ENCODE measurements at regions of chr5 and their contacts with region 1.

Region 1: DNA sequence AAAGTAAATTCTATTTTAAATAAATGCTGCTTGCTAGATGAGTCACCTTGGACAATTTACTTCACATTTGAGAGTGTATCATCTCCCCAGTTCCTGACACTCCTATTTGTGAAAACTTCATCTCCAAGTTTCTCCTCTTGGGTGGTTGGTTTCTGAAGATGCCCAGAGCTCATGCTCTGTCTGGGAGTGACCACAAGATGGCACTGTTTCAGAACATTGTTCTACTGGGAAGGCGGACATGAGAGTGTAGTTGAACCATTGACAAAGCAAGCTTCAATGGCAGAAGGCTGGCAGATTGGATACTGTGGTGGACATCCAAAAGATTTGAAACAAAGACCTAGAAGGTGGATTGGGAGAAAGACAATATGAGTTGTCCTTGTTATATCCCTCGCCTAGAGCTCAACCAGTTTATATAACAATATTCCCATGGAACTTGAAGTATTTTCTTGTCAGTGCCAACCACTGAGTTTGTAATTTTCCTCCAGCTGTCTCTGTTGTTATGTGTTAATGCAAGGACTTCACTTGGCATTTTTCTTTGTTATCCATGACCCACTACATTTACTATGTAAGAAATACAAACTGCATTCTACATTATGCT is 234.3 kb upstream of the ANKH start:
- DNase-seq: peak in 1 of 2 experiments; percentile 39
- H3K4me3 ChIP-seq: no peak overlapping the region
- H3K27ac ChIP-seq: no peak overlapping the region
- H3K4me1 ChIP-seq: no peaks in the 10 kb centered on the region
- H3K27me3 ChIP-seq: no peaks in the 10 kb centered on the region
- CTCF ChIP-seq: peak; percentile 83

Region 2: DNA sequence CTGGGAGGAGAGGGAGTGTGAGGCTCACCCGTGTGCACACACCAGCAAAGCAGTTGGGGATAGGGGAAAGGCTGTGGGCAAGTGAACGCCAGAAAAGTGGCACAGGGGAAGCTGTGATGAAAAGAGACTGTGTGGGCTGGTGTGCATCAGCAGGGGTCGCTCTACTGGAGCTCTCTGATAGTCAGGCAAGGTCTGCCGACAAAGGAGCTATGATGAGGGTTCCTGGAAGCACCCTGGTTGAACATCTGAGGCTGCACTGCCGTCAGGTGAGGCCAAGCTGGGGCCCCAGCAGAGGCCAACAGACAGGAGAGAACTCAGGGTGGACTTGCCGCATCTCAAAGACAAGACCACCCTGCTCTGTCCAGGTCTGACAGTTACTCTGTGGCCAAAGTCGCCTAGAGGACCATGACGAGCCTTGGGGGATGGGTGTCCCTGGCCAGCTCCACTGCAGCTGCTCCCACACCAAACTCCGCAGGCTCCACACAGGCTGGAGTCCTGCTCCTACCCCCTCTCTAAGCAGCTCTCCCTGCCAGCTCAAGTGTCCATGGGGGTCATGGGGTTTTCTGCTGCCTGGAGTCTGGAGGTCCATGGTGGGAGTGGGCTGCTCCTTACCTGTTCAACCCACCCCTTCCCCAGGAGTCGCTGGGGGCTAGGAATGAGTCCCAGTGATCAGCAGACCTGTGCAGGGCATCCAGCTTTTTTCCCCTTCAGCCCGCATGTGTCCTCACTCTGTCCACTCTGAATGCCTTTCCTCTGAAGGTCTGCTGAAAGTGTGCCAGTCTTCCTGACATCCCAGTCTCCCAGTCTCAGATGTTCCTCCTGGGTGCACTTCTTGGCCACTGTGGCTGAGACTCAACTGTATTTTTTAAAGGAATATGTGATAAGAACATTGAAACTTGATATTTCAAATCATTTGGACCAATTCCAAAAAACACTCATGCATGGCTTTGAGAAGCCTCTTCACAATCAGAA is 26.8 kb after region 1 on chr5:
- CTCF ChIA-PET with region 1: interaction called, 3 read pairs
- POLR2A ChIA-PET with region 1: interaction called, 10 read pairs
- intact Hi-C with region 1: no loop called
- DNase-seq: no peak
- H3K4me3 ChIP-seq: no peak overlapping the region
- H3K27ac ChIP-seq: no peak overlapping the region
- H3K4me1 ChIP-seq: no peaks in the 10 kb centered on the region
- H3K27me3 ChIP-seq: no peaks in the 10 kb centered on the region
- CTCF ChIP-seq: no peak

Region 3: DNA sequence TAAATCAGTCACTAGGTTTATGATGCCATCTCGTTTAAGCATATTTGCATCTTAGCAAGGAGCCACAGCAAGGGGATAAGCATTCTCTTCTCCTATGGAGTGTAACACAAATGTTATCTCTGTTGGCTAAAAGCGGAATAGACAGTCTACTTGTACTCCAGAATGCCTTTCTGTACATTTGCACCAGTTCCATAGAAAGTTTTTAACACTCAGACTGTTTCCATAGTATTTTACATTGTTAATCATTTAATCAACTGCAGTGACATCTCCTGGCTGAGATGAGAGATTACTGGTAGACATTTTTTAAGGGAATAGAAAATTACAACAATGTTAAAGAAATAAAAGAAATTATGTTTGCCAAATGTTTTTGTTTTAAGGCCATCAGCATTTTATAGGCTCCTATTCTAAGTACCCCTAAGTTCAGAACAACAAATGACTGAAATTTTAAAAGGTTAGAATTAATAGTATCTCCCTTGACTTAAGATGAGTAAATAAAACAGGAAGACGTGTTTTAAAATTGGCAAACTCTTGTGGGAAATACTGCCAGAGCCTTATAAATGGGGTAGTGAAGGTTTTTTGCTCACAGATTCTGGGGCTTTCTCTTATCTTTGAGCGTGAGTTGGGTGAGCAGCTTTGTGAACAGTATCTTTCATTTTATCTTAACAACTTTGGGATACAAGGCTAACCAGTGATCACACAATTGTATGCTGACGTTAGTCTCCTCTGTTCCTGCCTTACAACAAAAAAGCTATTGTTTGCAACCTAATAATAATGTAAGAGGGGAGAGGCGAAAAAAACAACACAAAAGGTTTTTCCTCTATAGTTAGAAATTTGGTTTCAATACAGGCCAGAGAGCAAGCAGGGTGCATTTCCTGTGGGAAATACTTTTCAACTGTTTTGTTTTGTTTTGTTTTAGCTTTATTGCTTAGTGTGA is 688.4 kb after region 1 on chr5:
- CTCF ChIA-PET with region 1: no interaction called
- POLR2A ChIA-PET with region 1: no interaction called
- intact Hi-C with region 1: loop called (anchors 5 kb)
- DNase-seq: no peak
- H3K4me3 ChIP-seq: no peak overlapping the region
- H3K27ac ChIP-seq: no peak overlapping the region
- H3K4me1 ChIP-seq: no peaks in the 10 kb centered on the region
- H3K27me3 ChIP-seq: no peaks in the 10 kb centered on the region
- CTCF ChIP-seq: peak; percentile 36; the same call in 1 of the 2 replicates

Region 4: GRCh38 chr5:15995341-15996052 is 889.6 kb after region 1 on chr5:
- CTCF ChIA-PET with region 1: no interaction called
- POLR2A ChIA-PET with region 1: no interaction called
- intact Hi-C with region 1: loop called (anchors 10 kb)
- DNase-seq: no peak
- H3K4me3 ChIP-seq: no peak overlapping the region
- H3K27ac ChIP-seq: no peak overlapping the region
- H3K4me1 ChIP-seq: no peaks in the 10 kb centered on the region
- H3K27me3 ChIP-seq: no peaks in the 10 kb centered on the region
- CTCF ChIP-seq: peak; percentile 57